ENCODE measurements at regions of chrX and their contacts with region 1.

Region 1: DNA sequence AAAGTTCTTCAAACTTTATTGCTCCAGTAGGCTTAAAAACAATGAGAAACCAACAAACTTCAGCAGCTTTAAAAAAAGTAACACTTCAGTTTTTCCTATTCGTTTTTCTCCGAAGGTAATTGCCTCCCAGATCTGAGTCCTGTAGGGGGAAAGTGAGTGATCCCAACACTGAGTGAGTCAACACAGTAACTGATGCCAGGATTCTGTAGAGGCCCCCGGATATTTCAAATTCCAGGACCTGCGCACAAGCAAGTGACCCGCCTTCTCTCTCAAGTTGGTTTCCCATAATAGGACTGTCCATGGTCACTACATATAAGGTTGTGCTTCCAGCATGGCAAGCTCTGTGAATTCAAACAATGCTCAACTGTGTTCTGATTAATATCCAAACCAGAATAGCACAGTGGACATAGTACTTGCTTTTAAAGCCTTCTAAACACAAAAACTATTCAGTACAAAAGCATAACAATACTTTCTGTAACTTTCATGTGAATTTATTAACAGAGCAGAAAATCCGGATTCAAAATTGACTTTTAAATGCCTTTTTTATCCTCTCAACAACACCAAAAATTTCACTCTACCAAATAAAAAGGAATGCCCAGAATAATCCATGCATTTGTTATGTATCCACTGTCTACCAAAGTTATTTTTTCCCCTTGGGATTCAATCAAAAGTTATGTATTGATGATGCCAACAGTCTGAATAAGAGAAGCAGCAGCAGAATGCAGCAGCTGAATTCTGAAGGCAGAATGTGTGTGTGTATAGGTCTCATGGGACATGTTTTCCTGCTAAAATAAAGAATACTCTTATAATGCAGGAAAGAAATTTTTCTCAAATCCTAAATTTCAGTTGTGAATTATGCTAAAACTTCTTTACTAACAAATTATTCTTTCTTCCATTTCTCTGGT is at the start of gene DMD:
- DNase-seq: peak; percentile 84
- ATAC-seq: peak; percentile 92
- H3K4me3 ChIP-seq: peak within 1 kb of the TSS; percentile 51
- H3K27ac ChIP-seq: peak within 1 kb of the TSS; percentile 33; the same call in 1 of the 2 replicates
- H3K4me1 ChIP-seq: no peaks in the 10 kb centered on the region
- H3K27me3 ChIP-seq: no peaks in the 10 kb centered on the region
- CTCF ChIP-seq: 0 out of 2 replicates have a peak, but pooled peaks have one; percentile 4
- POLR2A ChIP-seq: no peak
- RAD21 ChIP-seq: no peak
- total RNA-seq, gene DMD: 10.6 and 11.8 TPM in 2 replicates

Region 2: DNA sequence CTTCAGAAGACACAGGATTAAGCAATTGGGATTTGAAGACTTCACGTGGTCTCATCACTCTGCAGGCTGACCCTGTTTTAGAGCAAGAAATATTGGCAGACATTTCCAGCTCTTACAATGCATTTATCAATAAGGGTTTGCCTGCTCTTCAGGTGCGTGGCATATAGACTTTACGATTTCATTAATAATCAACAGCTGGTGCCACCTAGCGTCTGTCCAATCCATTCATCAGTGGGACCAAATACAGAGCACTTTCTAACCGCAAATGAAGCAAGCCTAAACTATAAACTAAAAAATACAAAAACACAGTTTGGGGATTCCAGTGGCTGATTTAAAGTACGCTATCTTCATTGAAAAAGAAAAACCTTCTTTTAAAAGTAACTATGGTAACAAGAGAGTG is 125.2 kb after region 1 on chrX:
- CTCF ChIA-PET with region 1: interaction called, 6 read pairs
- POLR2A ChIA-PET with region 1: no interaction called
- dilution Hi-C with region 1: no loop called
- in situ Hi-C with region 1: no loop called
- intact Hi-C with region 1: loop called (anchors 5 kb)
- DNase-seq: peak; percentile 29
- ATAC-seq: no peak
- H3K4me3 ChIP-seq: no peak overlapping the region
- H3K27ac ChIP-seq: no peak overlapping the region
- H3K4me1 ChIP-seq: no peaks in the 10 kb centered on the region
- H3K27me3 ChIP-seq: no peaks in the 10 kb centered on the region
- CTCF ChIP-seq: peak; percentile 47
- POLR2A ChIP-seq: no peak
- RAD21 ChIP-seq: peak; percentile 54

Measured in IMR-90 (cell line).